CD4-positive, alpha-beta T cell (primary cell): ENCODE measurements at regions of chr12 and their contacts with region 1.

Region 1: DNA sequence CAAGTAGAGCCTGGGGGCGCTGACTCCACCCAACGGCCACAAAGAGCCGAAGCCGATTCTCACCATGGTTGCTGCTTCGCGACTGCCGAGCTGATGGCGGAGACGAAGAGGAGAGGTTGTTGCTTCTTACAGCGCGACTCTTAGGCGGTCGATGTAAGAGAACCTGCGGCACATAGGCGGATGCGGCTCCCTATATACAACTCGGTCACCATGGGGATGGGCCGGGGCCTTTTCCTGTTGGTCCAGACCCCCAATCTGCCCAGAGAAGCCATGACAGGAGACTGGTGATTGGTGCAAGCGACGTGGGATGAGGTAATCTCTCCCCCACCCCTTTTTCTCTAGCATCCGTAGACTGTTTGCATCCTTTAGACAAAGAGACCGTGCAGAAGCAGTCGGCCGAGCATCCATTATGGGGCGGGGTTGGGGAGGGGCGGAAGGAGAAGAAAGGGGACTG is at the start of gene TUBA1A:
- DNase-seq: peak; percentile 92 to 99 (median 94)
- ATAC-seq: peak; percentile 83
- H3K4me3 ChIP-seq: peak within 1 kb of the TSS; percentile 95
- H3K4me3 Mint-ChIP-seq: peak within 1 kb of the TSS; percentile 96
- H3K27ac ChIP-seq: peak within 1 kb of the TSS; percentile 98 to 100
- H3K27ac Mint-ChIP-seq: peak within 1 kb of the TSS; percentile 99
- H3K4me1 ChIP-seq: peaks cover 15% of the 10 kb centered on the region
- H3K4me1 Mint-ChIP-seq: peaks cover 21% of the 10 kb centered on the region
- H3K27me3 ChIP-seq: no peaks in the 10 kb centered on the region
- H3K27me3 Mint-ChIP-seq: no peaks in the 10 kb centered on the region
- CTCF ChIP-seq: no peak
- total RNA-seq, gene TUBA1A: 295 to 305 TPM

Region 2: DNA sequence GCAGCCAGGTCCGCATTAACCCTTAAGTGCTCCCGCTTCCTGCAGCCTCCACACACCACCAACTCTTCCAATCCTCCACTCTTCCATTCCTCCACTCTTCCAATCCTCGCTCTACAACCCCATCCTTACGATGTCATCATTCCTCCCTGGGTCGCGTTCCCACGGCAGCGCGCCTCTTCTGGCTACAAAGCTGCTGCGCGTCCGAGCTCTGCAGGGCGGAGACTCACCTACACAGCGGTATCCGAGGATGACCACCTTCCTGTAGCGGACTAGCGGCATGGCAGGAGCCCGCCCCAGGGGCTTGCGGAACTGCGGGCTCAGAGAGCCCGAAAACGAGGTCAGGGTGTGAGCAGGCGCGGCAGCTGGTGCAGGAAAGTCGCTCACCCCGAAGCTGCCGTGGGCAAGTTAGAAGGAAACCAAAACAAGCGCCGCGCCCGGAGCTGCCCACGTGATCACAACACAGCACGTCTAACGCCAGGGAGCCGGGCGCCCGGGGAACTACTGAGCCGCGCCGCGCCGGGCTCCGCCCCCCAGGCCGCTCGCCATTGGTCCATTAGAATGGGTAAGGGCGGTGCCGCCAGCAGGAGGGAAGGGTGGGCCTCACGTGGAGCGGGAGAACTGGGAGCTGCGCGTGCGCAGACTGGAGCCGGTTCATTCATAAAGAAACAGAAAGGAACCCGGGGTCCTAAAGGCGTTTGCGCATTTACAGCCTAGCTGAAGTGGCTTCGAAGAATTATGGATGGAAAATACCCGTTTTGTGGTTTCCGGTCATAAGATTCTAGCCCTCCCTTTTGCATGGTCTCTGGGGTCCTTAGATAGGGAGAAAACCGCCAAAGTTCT is 119.2 kb before region 1 on chr12 and contains the start of gene RHEBL1:
- CTCF ChIA-PET with region 1: no interaction called
- POLR2A ChIA-PET with region 1: interaction called, 21 read pairs
- intact Hi-C with region 1: no loop called
- DNase-seq: peak; percentile 95 to 99 (median 97)
- ATAC-seq: peak; percentile 98
- H3K4me3 ChIP-seq: peak within 1 kb of the TSS; percentile 97
- H3K4me3 Mint-ChIP-seq: peak within 1 kb of the TSS; percentile 97
- H3K27ac ChIP-seq: peak within 1 kb of the TSS; percentile 61 to 76
- H3K27ac Mint-ChIP-seq: peak within 1 kb of the TSS; percentile 92
- H3K4me1 ChIP-seq: peaks cover 14% of the 10 kb centered on the region
- H3K4me1 Mint-ChIP-seq: peaks cover 21% of the 10 kb centered on the region
- H3K27me3 ChIP-seq: no peaks in the 10 kb centered on the region
- H3K27me3 Mint-ChIP-seq: peaks cover 3% of the 10 kb centered on the region
- CTCF ChIP-seq: no peak
- total RNA-seq, gene RHEBL1: 5.1 to 6.0 TPM

Region 3: GRCh38 chr12:49098035-49098451 is 90.9 kb before region 1 on chr12:
- CTCF ChIA-PET with region 1: no interaction called
- POLR2A ChIA-PET with region 1: interaction called, 10 read pairs
- intact Hi-C with region 1: no loop called
- DNase-seq: peak; percentile 36 to 80 (median 58)
- ATAC-seq: peak; percentile 73
- H3K4me3 ChIP-seq: no peak overlapping the region
- H3K4me3 Mint-ChIP-seq: no peak overlapping the region
- H3K27ac ChIP-seq: no peak overlapping the region
- H3K27ac Mint-ChIP-seq: no peak overlapping the region
- H3K4me1 ChIP-seq: peaks cover 15% of the 10 kb centered on the region
- H3K4me1 Mint-ChIP-seq: peaks cover 25% of the 10 kb centered on the region
- H3K27me3 ChIP-seq: peaks cover 16 to 20% of the 10 kb centered on the region in 2 experiments
- H3K27me3 Mint-ChIP-seq: peaks cover 28% of the 10 kb centered on the region
- CTCF ChIP-seq: peak; percentile 76

Region 4: DNA sequence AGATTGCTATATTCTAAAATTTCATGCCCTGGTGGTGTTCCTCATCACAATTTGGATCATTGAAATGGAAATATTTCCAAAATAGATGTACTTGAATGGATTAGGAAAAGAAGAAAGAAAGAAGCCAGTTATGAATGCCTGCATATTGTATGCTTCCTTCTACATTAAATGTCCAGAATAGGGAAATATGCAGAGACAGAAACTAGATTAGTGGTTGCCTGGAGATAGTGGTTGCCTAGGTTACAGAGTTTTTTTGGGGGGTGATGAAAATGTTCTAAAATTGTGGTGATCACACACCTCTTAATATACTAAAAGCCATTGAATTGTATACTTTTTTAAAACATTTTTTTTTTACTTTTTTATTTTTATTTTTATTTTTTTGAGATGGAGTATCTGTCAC is 18.0 kb before region 1 on chr12:
- CTCF ChIA-PET with region 1: no interaction called
- POLR2A ChIA-PET with region 1: interaction called, 13 read pairs
- intact Hi-C with region 1: no loop called
- DNase-seq: no peak
- ATAC-seq: no peak
- H3K4me3 ChIP-seq: no peak overlapping the region
- H3K4me3 Mint-ChIP-seq: no peak overlapping the region
- H3K27ac ChIP-seq: no peak overlapping the region
- H3K27ac Mint-ChIP-seq: no peak overlapping the region
- H3K4me1 ChIP-seq: no peaks in the 10 kb centered on the region
- H3K4me1 Mint-ChIP-seq: no peaks in the 10 kb centered on the region
- H3K27me3 ChIP-seq: no peaks in the 10 kb centered on the region
- H3K27me3 Mint-ChIP-seq: no peaks in the 10 kb centered on the region
- CTCF ChIP-seq: no peak

Region 5: DNA sequence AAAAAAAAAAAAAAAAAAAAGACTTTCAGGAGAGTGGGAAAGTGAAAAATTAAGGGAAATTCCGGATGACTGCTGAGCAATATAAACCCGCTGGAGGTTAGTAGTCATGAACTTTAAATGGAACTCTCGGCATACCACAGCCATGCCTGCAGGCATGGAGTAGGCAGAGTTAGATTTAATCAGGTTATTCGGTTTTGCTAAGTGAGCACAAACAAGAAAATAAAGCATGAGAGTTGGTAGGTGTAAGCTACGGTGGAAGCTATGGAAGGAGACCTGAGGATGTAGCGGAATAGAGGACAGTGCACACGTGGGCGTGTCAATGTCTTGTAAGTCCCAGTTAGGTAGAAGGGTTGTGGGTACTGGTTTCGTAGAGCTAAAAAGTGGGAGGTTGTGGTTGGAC is 64.1 kb after region 1 on chr12:
- CTCF ChIA-PET with region 1: no interaction called
- POLR2A ChIA-PET with region 1: no interaction called
- intact Hi-C with region 1: no loop called
- DNase-seq: no peak
- ATAC-seq: no peak
- H3K4me3 ChIP-seq: no peak overlapping the region
- H3K4me3 Mint-ChIP-seq: no peak overlapping the region
- H3K27ac ChIP-seq: no peak overlapping the region
- H3K27ac Mint-ChIP-seq: no peak overlapping the region
- H3K4me1 ChIP-seq: no peaks in the 10 kb centered on the region
- H3K4me1 Mint-ChIP-seq: no peaks in the 10 kb centered on the region
- H3K27me3 ChIP-seq: no peaks in the 10 kb centered on the region
- H3K27me3 Mint-ChIP-seq: no peaks in the 10 kb centered on the region
- CTCF ChIP-seq: no peak

Region 6: DNA sequence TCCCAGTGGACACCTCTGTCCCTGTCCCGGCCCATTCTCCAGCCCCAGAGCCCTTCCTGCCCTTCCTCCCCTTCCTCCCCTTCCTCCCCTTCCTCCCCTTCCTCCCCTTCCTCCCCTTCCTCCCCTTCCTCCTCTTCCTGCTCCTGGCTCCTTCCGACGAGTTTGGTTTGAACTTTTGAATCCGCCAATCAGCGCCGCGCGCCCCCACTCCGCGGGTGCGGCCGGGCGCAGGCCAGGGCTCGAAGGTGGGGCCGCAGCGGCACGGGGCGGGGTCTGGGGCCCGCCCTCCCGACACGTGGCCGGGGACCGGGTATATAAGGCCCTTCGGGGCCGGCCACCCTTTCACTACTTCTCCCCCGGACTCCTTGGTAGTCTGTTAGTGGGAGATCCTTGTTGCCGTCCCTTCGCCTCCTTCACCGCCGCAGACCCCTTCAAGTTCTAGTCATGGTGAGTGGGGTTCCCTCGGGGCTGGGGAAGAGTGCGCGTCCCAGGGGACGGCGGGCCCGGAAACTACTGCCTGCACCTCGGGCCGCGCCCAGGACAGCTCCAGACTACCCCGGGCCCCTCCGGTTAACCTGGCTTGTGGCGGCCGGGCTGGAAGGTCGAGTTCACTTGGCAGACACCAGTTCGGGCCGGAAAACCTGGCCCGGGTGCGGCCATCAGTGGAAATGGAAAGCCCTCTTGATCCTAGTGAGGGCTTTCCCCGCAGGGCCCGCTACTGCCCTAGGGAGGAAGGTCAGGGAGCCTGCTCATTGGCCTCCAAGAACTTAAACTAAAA is 76.0 kb after region 1 on chr12 and contains the start of gene TUBA1C:
- CTCF ChIA-PET with region 1: no interaction called
- POLR2A ChIA-PET with region 1: interaction called, 30 read pairs
- intact Hi-C with region 1: no loop called
- DNase-seq: peak; percentile 60 to 91 (median 80)
- ATAC-seq: peak; percentile 80
- H3K4me3 ChIP-seq: peak within 1 kb of the TSS; percentile 86
- H3K4me3 Mint-ChIP-seq: peak within 1 kb of the TSS; percentile 99
- H3K27ac ChIP-seq: peak within 1 kb of the TSS; percentile 57 to 74
- H3K27ac Mint-ChIP-seq: peak within 1 kb of the TSS; percentile 92
- H3K4me1 ChIP-seq: peaks cover 38% of the 10 kb centered on the region
- H3K4me1 Mint-ChIP-seq: peaks cover 23% of the 10 kb centered on the region
- H3K27me3 ChIP-seq: no peaks in the 10 kb centered on the region
- H3K27me3 Mint-ChIP-seq: no peaks in the 10 kb centered on the region
- CTCF ChIP-seq: no peak
- total RNA-seq, gene TUBA1C: 23.4 to 28.9 TPM